ENCODE measurements at regions of chr3 and their contacts with region 1.

Region 1: GRCh38 chr3:137963473-137963872 is 46.5 kb upstream of the CLDN18 start:
- DNase-seq: no peak
- H3K4me3 ChIP-seq: no peak overlapping the region
- H3K27ac ChIP-seq: no peak overlapping the region
- H3K4me1 ChIP-seq: no peaks in the 10 kb centered on the region
- H3K27me3 ChIP-seq: no peaks in the 10 kb centered on the region
- CTCF ChIP-seq: no peak
- POLR2A ChIP-seq: no peak

Region 2: DNA sequence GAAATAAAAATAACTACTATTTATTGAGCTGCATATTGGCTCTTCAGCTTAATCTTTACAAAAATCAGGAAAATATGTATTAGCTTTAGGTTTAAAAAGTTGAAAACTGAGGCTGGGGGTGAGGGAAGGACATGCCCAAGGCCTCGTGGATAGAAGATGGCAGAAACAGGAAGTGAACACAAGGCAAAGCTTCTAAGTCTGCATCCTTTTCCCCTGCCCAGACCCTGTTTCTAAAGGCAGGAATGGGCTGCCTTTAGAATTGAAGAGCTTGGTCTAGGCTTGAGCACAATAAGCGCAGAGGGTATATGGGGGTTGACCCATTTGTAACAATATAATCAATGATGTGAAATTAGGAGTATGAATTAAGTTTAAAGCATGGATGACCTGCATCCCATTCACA is 52.6 kb after region 1 on chr3:
- intact Hi-C with region 1: loop called (anchors 2 kb)
- DNase-seq: no peak
- H3K4me3 ChIP-seq: no peak overlapping the region
- H3K27ac ChIP-seq: no peak overlapping the region
- H3K4me1 ChIP-seq: no peaks in the 10 kb centered on the region
- H3K27me3 ChIP-seq: no peaks in the 10 kb centered on the region
- CTCF ChIP-seq: no peak
- POLR2A ChIP-seq: no peak

Region 3: DNA sequence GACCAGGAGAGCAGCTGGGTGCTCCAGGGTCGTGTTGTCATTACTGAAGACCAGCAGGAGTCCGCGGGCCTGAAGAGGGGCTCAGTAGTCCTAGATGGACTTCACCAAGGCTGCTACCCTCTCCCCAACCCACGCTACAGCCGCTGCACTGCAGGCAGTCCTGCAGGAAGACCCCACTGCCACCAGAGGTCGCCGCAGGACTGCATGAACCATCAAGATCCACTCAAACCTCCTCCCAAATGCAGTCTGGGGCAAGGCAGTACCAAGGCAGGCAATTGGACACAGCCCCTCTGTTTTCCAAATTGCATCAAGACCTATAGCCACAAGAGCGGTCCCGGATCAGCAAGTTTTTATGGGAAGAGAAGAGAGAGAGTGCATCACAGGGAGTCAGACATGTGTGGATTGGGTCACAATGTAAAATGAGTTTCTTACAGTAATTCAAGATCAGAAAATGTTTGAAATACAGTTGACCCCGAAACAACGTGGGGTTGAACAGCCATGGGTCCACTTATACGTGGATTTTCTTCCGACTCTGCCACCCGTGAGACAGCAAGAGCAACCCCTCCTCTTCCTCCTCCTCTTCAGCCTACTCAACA is 105.2 kb after region 1 on chr3:
- intact Hi-C with region 1: no loop called
- DNase-seq: no peak
- H3K4me3 ChIP-seq: no peak overlapping the region
- H3K27ac ChIP-seq: no peak overlapping the region
- H3K4me1 ChIP-seq: no peaks in the 10 kb centered on the region
- H3K27me3 ChIP-seq: no peaks in the 10 kb centered on the region
- CTCF ChIP-seq: peak; percentile 89 to 96 (median 92)
- POLR2A ChIP-seq: no peak

Measured in vagina (tissue), 2 donors.